HepG2 (cell line): ENCODE measurements at regions of chr17 and their contacts with region 1.

Region 1: GRCh38 chr17:71472809-71473789 is 647.7 kb upstream of the SOX9 start:
- DNase-seq: peak; percentile 65
- ATAC-seq: peak; percentile 93
- H3K4me3 ChIP-seq: no peak overlapping the region
- H3K27ac ChIP-seq: no peak overlapping the region
- H3K4me1 ChIP-seq: no peaks in the 10 kb centered on the region
- H3K27me3 ChIP-seq: no peaks in the 10 kb centered on the region
- CTCF ChIP-seq: peak; percentile 80
- EP300 ChIP-seq: no peak
- POLR2A ChIP-seq: no peak
- RAD21 ChIP-seq: peak; percentile 80

Region 2: GRCh38 chr17:71460943-71461342 is 12.2 kb before region 1 on chr17:
- CTCF ChIA-PET with region 1: no interaction called
- POLR2A ChIA-PET with region 1: no interaction called
- in situ Hi-C with region 1: no loop called
- intact Hi-C with region 1: no loop called
- DNase-seq: no peak
- ATAC-seq: no peak
- H3K4me3 ChIP-seq: no peak overlapping the region
- H3K27ac ChIP-seq: no peak overlapping the region
- H3K4me1 ChIP-seq: no peaks in the 10 kb centered on the region
- H3K27me3 ChIP-seq: peaks cover 0 to 4% of the 10 kb centered on the region in 2 experiments; a peak in 1 of 5 replicates
- CTCF ChIP-seq: no peak
- EP300 ChIP-seq: no peak
- POLR2A ChIP-seq: no peak
- RAD21 ChIP-seq: no peak

Region 3: DNA sequence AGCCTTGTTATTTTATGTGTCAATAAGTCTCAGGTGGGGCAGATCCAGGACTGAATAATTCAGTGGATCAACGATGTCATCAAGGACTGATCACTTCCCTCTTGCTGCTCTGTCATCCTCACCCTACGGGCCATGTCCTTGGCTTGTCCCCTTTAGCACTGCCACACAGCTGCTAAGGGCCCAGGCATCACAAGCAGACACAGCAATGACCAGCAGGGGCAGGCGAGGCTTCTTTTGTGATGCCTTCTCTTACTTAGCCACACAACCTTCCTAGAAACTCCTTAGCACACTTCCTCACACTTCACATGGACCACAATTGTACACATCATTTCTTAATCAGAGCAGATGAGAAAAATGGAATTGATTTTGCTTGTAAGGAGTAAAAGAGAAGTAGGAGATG is 291.4 kb after region 1 on chr17:
- CTCF ChIA-PET with region 1: no interaction called
- POLR2A ChIA-PET with region 1: no interaction called
- in situ Hi-C with region 1: no loop called
- intact Hi-C with region 1: loop called (anchors 1 kb)
- DNase-seq: peak; percentile 25
- ATAC-seq: peak; percentile 97
- H3K4me3 ChIP-seq: no peak overlapping the region
- H3K27ac ChIP-seq: no peak overlapping the region
- H3K4me1 ChIP-seq: no peaks in the 10 kb centered on the region
- H3K27me3 ChIP-seq: no peaks in the 10 kb centered on the region
- CTCF ChIP-seq: peak; percentile 53
- EP300 ChIP-seq: no peak
- POLR2A ChIP-seq: no peak
- RAD21 ChIP-seq: 0 out of 2 replicates have a peak, but pooled peaks have one; percentile 27

Region 4: GRCh38 chr17:71959154-71959553 is 486.1 kb after region 1 on chr17:
- CTCF ChIA-PET with region 1: interaction called, 3 read pairs
- POLR2A ChIA-PET with region 1: no interaction called
- in situ Hi-C with region 1: no loop called
- intact Hi-C with region 1: loop called (anchors 2 kb)
- DNase-seq: peak; percentile 23
- ATAC-seq: peak; percentile 57
- H3K4me3 ChIP-seq: no peak overlapping the region
- H3K27ac ChIP-seq: no peak overlapping the region
- H3K4me1 ChIP-seq: no peaks in the 10 kb centered on the region
- H3K27me3 ChIP-seq: peaks cover 0 to 1% of the 10 kb centered on the region in 2 experiments; a peak in 2 of 5 replicates
- CTCF ChIP-seq: peak; percentile 49
- EP300 ChIP-seq: no peak
- POLR2A ChIP-seq: no peak
- RAD21 ChIP-seq: no peak